ENCODE measurements at regions of chr4 and their contacts with region 1.

Region 1: GRCh38 chr4:2963175-2963965 is at the starts of genes GRK4 and NOP14:
- DNase-seq: peak; percentile 97
- H3K4me3 Mint-ChIP-seq: peak within 1 kb of the TSS; percentile 92
- H3K27ac Mint-ChIP-seq: peak within 1 kb of the TSS; percentile 87
- H3K4me1 Mint-ChIP-seq: peaks cover 28% of the 10 kb centered on the region
- H3K27me3 Mint-ChIP-seq: no peaks in the 10 kb centered on the region
- total RNA-seq, gene GRK4: 4.5 and 4.6 TPM in 2 replicates
- total RNA-seq, gene NOP14: 104 and 106 TPM in 2 replicates

Region 2: GRCh38 chr4:2536193-2537010 is 427.0 kb before region 1 on chr4 and contains the start of gene FAM193A:
- intact Hi-C with region 1: loop called (anchors 2 kb)
- DNase-seq: peak; percentile 99
- H3K4me3 Mint-ChIP-seq: peak within 1 kb of the TSS; percentile 90
- H3K27ac Mint-ChIP-seq: peak within 1 kb of the TSS; percentile 93
- H3K4me1 Mint-ChIP-seq: peaks cover 10% of the 10 kb centered on the region
- H3K27me3 Mint-ChIP-seq: no peaks in the 10 kb centered on the region
- total RNA-seq, gene FAM193A: 30.8 and 31.2 TPM in 2 replicates

Region 3: GRCh38 chr4:3041192-3042142 is 78.1 kb after region 1 on chr4:
- intact Hi-C with region 1: loop called (anchors 5 kb)
- DNase-seq: peak; percentile 43
- H3K4me3 Mint-ChIP-seq: peak overlapping the region; percentile 84
- H3K27ac Mint-ChIP-seq: peak overlapping the region; percentile 74
- H3K4me1 Mint-ChIP-seq: peaks cover 47% of the 10 kb centered on the region
- H3K27me3 Mint-ChIP-seq: peaks cover 3% of the 10 kb centered on the region

Region 4: DNA sequence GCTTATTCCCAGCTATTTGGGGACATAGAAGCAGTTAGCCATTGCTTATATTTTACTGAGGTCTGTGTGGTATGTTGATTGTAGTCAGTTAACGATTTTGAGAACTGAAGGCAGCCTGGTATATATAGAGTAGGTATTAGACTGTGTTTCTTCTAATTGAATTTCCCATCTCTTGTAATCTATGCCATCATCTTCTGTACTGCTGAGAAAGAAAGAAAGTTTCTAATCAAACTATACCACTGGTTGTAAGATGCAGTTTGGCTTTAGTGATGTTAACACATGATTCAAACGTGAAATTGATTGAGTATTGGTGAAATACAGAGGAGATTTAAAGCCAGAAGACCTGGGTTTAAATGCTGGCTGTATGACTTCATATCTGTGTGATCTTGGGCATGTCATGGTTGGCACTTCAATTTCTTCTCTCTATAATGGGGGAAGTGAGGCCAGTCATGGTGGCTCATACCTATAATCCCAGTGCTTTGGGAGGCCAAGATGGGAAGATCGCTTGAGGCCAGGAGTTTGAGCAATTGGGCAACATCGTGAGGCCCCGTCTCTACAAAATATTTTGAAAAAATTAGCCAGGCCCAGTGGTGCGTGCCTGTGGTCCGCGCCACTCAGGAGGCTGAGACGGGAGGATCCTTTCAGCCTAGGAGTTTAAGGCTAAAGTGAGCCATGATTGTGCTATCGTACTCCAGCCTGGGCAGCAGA is 122.7 kb after region 1 on chr4:
- intact Hi-C with region 1: loop called (anchors 5 kb)
- DNase-seq: no peak
- H3K4me3 Mint-ChIP-seq: no peak overlapping the region
- H3K27ac Mint-ChIP-seq: peak overlapping the region; percentile 67
- H3K4me1 Mint-ChIP-seq: peaks cover 45% of the 10 kb centered on the region
- H3K27me3 Mint-ChIP-seq: no peaks in the 10 kb centered on the region

Measured in activated T-helper 2 cell treated with anti-CD3 and anti-CD28 coated beads, Interferon-gamma antibody, Interleukin-2, Interleukin-4, amounts not matched to agents 10 μg/mL and 5 μg/mL and 100 μg/mL, durations not matched to agents 14 hours and 24 hours and 36 hours (primary cell).